ENCODE measurements at regions of chr5 and their contacts with region 1.

Region 1: DNA sequence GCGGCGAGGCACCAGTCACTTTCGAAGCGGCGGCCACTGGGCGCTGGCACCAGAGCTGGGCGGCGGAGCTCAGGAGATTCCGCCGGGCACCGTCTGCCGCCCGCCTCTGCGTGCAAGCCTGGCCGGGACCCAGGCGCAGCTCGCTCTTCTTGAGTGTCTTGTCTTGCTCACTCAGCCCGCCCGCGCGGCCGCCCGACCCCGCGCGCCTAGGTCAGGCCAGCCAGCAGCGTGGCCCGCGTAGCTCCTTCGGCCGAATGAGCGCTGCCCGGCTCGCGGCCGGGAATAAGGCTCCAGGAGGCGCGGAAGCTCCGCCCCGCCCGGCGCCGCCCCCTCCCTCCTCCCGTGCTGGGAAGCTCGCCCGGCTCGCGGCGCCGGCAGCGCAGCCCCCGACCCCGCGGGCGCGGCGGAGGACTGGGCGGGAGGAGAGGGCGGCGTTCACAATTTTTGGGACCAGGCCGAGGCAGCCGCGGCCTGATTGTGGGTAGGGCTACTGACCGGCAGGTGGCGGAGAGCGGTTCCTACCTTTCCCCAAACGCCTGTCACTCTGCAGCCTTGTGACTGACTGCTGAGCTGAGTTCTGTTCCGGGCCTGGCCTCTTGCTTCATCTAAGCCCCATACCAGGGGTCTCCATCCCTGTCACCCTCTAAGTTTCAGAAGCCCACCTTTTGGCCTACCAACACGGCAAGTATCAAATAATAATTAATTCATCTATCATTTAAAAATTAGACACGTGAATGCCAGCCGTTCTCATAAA is at the start of gene HBEGF:
- DNase-seq: peak; percentile 70 to 92
- H3K4me3 ChIP-seq: peak within 1 kb of the TSS; percentile 94
- H3K27ac ChIP-seq: peak within 1 kb of the TSS; percentile 95
- H3K4me1 ChIP-seq: peaks cover 85% of the 10 kb centered on the region
- H3K27me3 ChIP-seq: no peaks in the 10 kb centered on the region
- CTCF ChIP-seq: peak; percentile 70
- total RNA-seq, gene HBEGF: 8.5 and 9.0 TPM in 2 replicates

Region 2: GRCh38 chr5:140244525-140245025 is 102.0 kb before region 1 on chr5:
- CTCF ChIA-PET with region 1: interaction called, 34 read pairs
- POLR2A ChIA-PET with region 1: interaction called, 13 read pairs
- intact Hi-C with region 1: loop called (anchors 1 kb)
- DNase-seq: peak; percentile 77 to 82
- H3K4me3 ChIP-seq: no peak overlapping the region
- H3K27ac ChIP-seq: no peak overlapping the region
- H3K4me1 ChIP-seq: peaks cover 45% of the 10 kb centered on the region
- H3K27me3 ChIP-seq: no peaks in the 10 kb centered on the region
- CTCF ChIP-seq: peak; percentile 91

Region 3: GRCh38 chr5:140295414-140295813 is 51.1 kb before region 1 on chr5:
- CTCF ChIA-PET with region 1: interaction called, 6 read pairs
- POLR2A ChIA-PET with region 1: interaction called, 24 read pairs
- intact Hi-C with region 1: no loop called
- DNase-seq: peak; percentile 62 to 92
- H3K4me3 ChIP-seq: no peak overlapping the region
- H3K27ac ChIP-seq: peak overlapping the region; percentile 45
- H3K4me1 ChIP-seq: peaks cover 60% of the 10 kb centered on the region
- H3K27me3 ChIP-seq: no peaks in the 10 kb centered on the region
- CTCF ChIP-seq: no peak

Region 4: GRCh38 chr5:140312067-140312790 is 34.3 kb before region 1 on chr5:
- CTCF ChIA-PET with region 1: interaction called, 3 read pairs
- POLR2A ChIA-PET with region 1: interaction called, 11 read pairs
- intact Hi-C with region 1: no loop called
- DNase-seq: peak; percentile 33 to 83
- H3K4me3 ChIP-seq: no peak overlapping the region; the same call in 1 of the 2 replicates
- H3K27ac ChIP-seq: peak overlapping the region; percentile 89
- H3K4me1 ChIP-seq: peaks cover 46% of the 10 kb centered on the region
- H3K27me3 ChIP-seq: no peaks in the 10 kb centered on the region
- CTCF ChIP-seq: no peak

Region 5: GRCh38 chr5:140336388-140336787 is 10.1 kb before region 1 on chr5:
- CTCF ChIA-PET with region 1: no interaction called
- POLR2A ChIA-PET with region 1: interaction called, 21 read pairs
- intact Hi-C with region 1: no loop called
- DNase-seq: peak in 1 of 2 experiments; percentile 24
- H3K4me3 ChIP-seq: no peak overlapping the region
- H3K27ac ChIP-seq: no peak overlapping the region
- H3K4me1 ChIP-seq: peaks cover 20% of the 10 kb centered on the region
- H3K27me3 ChIP-seq: no peaks in the 10 kb centered on the region
- CTCF ChIP-seq: no peak

Region 6: GRCh38 chr5:140639148-140639979 is 292.8 kb after region 1 on chr5 and contains the start of gene TMCO6:
- CTCF ChIA-PET with region 1: no interaction called
- POLR2A ChIA-PET with region 1: no interaction called
- intact Hi-C with region 1: loop called (anchors 5 kb)
- DNase-seq: peak; percentile 89 to 95
- H3K4me3 ChIP-seq: peak within 1 kb of the TSS; percentile 78
- H3K27ac ChIP-seq: peak within 1 kb of the TSS; percentile 73
- H3K4me1 ChIP-seq: peaks cover 10% of the 10 kb centered on the region
- H3K27me3 ChIP-seq: no peaks in the 10 kb centered on the region
- CTCF ChIP-seq: peak; percentile 63
- total RNA-seq, gene TMCO6: 12.1 and 25.2 TPM in 2 replicates

Measured in PC-9 (cell line).